GM23248 (cell line): ENCODE measurements at regions of chr9 and their contacts with region 1.

Region 1: DNA sequence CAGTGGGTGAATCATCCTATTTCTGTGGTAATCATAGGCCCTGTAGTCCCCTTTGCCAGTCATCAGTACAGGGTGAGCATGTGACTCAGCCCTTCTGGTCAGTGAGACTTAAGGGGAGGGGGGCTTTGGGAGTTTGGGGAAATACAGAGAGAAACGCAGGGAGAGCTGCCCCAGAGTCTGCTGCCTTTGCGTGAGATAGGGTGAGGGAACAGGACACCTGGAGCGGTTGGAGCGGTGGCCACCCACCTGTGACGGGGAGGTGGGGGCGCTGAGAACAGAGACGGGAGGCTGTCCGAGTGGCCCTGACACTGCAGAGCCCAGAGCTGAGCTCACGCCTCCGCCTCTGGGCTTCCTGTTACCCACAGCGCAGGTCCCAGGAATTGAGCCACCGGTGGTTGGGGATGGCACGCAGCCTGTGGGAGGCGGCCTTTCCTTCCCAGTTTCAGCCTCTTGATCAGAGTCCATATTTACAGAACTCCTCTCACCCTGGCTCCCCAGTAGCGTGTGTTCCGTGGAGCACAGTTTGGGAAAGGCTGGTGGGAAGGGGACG is 92.0 kb upstream of the ERCC6L2 start:
- DNase-seq: peak; percentile 51
- H3K4me3 ChIP-seq: no peak overlapping the region
- H3K27ac ChIP-seq: no peak overlapping the region
- H3K4me1 ChIP-seq: no peaks in the 10 kb centered on the region
- H3K27me3 ChIP-seq: peaks cover 35% of the 10 kb centered on the region

Region 2: DNA sequence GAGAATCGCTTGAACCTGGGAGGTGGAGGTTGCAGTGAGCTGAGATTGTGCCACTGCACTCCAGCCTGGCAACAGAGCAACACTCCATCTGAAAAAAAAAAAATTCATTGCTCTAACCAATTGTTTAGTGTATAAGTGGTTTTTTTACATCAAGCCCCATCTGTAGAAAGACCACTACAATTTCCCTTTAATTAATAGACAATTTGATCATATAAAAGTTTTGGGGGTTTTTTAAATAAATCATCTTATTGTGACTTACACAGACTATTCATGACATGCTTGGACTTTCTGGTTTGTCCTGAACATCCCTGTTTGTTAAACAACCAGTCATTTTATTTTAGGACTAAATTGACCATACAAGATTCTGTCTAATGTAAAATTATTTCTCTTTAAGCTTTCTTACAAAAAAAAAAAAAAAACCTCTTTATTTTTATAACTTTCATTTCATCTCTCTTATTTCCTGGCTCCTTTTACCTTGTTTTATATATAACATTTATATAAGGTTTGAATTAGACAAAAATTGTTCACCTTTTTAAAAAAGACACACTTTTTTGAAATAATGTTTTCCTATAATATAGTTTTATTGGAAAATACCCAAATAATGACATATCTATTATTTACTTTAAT is 456.1 kb before region 1 on chr9:
- in situ Hi-C with region 1: no loop called
- DNase-seq: no peak
- H3K4me3 ChIP-seq: no peak overlapping the region
- H3K27ac ChIP-seq: no peak overlapping the region
- H3K4me1 ChIP-seq: no peaks in the 10 kb centered on the region
- H3K27me3 ChIP-seq: no peaks in the 10 kb centered on the region

Region 3: GRCh38 chr9:95670122-95670521 is 113.4 kb before region 1 on chr9:
- in situ Hi-C with region 1: no loop called
- DNase-seq: no peak
- H3K4me3 ChIP-seq: no peak overlapping the region
- H3K27ac ChIP-seq: no peak overlapping the region
- H3K4me1 ChIP-seq: no peaks in the 10 kb centered on the region
- H3K27me3 ChIP-seq: peaks cover 17% of the 10 kb centered on the region

Region 4: DNA sequence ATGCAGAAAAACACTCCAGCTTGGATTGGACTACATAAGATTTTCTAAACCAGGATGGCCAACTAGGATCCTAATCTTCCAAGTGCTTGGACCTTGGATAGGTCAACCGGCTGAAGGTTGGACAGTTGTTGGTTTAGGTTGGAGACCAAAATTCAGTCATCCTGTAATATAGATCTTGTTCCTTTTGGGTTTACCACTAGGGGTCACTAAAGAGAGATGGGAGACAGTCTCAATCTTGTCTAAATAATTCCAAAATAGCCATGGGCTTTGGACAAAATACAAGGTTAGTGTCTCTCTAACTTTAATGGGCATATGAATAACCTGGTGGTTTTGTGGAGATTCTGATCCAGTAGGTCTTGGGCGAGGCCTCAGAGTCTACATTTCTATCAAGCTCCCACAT is 56.7 kb before region 1 on chr9:
- in situ Hi-C with region 1: no loop called
- DNase-seq: peak; percentile 66
- H3K4me3 ChIP-seq: no peak overlapping the region
- H3K27ac ChIP-seq: no peak overlapping the region
- H3K4me1 ChIP-seq: no peaks in the 10 kb centered on the region
- H3K27me3 ChIP-seq: peaks cover 23% of the 10 kb centered on the region

Region 5: GRCh38 chr9:95840074-95840473 is 56.6 kb after region 1 on chr9:
- in situ Hi-C with region 1: loop called (anchors 10 kb)
- DNase-seq: no peak
- H3K4me3 ChIP-seq: no peak overlapping the region
- H3K27ac ChIP-seq: no peak overlapping the region
- H3K4me1 ChIP-seq: peaks cover 9% of the 10 kb centered on the region
- H3K27me3 ChIP-seq: no peaks in the 10 kb centered on the region